BJ (cell line): ENCODE measurements at regions of chr15 and their contacts with region 1.

Region 1: DNA sequence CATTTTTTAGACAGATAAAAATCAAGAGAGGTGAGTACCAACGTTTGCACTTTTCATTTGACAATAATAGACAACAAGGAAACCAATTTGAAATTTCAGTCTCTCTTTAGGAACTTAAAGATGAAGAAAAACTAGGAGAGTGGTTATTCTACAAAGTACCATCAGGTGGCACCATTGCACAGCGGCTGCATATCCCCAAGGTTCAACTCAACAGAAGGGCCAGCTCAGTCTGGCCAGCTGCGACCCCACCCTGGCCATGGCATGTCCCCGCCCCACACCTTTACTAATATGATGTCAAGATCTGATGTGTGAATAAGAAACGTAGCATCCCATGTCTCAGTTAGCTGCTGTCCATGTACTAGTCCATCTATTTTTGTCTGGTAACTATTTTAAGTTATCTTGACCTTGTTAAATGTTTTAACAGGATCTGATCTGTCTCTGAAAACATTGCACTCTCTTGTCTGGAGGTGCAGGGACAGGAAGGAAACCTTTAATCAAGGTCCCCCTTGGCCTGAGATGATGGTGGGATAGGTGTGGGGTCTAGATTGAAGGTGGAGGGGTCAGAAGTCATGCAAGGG is 35.5 kb upstream of the CGNL1 start:
- DNase-seq: no peak
- H3K4me3 ChIP-seq: no peak overlapping the region
- H3K27me3 ChIP-seq: no peaks in the 10 kb centered on the region
- CTCF ChIP-seq: peak; percentile 82

Region 2: DNA sequence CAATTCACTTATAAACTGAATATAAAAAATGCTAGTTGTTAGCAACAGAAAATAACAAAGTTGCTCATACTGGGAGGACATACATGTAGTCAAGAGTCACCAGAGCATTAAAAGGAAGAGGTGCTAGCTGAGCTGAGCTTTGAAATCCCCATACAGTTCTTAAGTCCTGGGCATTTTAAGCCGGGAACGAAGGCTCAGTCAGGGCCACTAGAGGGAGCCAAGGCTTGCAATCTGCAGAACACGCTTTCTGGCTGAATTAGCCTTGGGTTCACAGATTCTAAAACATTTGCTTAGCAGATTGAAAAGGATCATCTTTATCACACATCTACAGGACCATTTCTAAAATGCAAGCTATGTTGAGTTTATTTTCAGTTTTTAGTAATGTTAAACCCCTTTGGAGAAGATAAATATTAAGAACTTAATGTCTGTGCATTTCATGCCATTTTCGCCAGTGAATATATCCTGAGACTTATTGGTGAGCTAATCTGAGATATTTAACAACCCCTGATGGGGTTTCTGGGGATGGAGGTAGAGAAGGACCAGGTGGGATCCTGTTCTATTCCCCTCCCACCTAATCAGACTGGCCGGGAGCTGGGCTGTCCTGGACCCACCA is 849.6 kb before region 1 on chr15:
- CTCF ChIA-PET with region 1: no interaction called
- POLR2A ChIA-PET with region 1: interaction called, 10 read pairs
- DNase-seq: peak; percentile 18
- H3K4me3 ChIP-seq: no peak overlapping the region
- H3K27me3 ChIP-seq: no peaks in the 10 kb centered on the region; the same call in 1 of the 2 replicates
- CTCF ChIP-seq: peak; percentile 96

Region 3: GRCh38 chr15:57323806-57324589 is 16.8 kb before region 1 on chr15:
- CTCF ChIA-PET with region 1: interaction called, 21 read pairs
- POLR2A ChIA-PET with region 1: no interaction called
- DNase-seq: peak; percentile 34
- H3K4me3 ChIP-seq: no peak overlapping the region
- H3K27me3 ChIP-seq: no peaks in the 10 kb centered on the region
- CTCF ChIP-seq: no peak

Region 4: GRCh38 chr15:57462381-57462780 is 121.6 kb after region 1 on chr15:
- CTCF ChIA-PET with region 1: interaction called, 15 read pairs
- POLR2A ChIA-PET with region 1: no interaction called
- DNase-seq: no peak
- H3K4me3 ChIP-seq: no peak overlapping the region
- H3K27me3 ChIP-seq: peaks cover 4% of the 10 kb centered on the region; the same call in 1 of the 2 replicates
- CTCF ChIP-seq: peak; percentile 38

Region 5: GRCh38 chr15:57527382-57528091 is 186.8 kb after region 1 on chr15:
- CTCF ChIA-PET with region 1: interaction called, 336 read pairs
- POLR2A ChIA-PET with region 1: interaction called, 5 read pairs
- DNase-seq: no peak
- H3K4me3 ChIP-seq: no peak overlapping the region
- H3K27me3 ChIP-seq: no peaks in the 10 kb centered on the region
- CTCF ChIP-seq: peak; percentile 51

Region 6: DNA sequence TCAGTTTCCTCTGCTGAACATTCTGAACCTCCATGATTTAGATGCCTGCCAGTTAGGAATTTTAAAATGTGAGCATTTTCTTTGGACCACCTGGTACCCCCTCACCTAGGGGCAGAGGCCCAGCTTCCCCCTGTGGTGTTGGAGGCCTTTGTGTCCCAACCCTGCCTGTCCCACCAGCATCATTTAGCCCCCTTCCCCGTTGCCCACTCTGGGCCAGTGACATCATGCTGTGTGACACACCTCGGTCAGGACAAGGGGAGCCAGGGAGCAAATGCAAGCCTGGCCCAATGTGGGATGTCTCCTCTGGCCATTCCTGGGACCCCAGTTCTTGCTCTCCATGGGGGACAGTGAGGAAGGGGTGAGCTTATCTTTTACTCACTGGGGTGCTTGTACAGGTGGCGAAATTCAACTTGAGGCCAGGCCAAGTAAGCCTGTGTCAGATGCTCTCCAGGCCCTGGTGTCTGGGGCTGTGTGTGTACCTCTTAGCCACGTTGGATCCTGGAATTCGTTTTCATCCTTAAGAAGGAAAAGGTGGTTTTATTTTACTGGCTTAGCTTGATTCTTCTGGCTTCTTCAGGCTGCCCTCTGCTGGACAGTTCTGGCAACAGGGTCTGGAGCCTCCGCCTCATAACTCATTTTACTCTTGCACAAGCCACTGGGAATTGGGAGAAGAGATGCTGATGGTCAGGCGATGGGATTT is 201.2 kb after region 1 on chr15:
- CTCF ChIA-PET with region 1: interaction called, 63 read pairs
- POLR2A ChIA-PET with region 1: no interaction called
- DNase-seq: peak; percentile 18
- H3K4me3 ChIP-seq: no peak overlapping the region
- H3K27me3 ChIP-seq: no peaks in the 10 kb centered on the region; the same call in none of the 2 replicates
- CTCF ChIP-seq: peak; percentile 92

Region 7: DNA sequence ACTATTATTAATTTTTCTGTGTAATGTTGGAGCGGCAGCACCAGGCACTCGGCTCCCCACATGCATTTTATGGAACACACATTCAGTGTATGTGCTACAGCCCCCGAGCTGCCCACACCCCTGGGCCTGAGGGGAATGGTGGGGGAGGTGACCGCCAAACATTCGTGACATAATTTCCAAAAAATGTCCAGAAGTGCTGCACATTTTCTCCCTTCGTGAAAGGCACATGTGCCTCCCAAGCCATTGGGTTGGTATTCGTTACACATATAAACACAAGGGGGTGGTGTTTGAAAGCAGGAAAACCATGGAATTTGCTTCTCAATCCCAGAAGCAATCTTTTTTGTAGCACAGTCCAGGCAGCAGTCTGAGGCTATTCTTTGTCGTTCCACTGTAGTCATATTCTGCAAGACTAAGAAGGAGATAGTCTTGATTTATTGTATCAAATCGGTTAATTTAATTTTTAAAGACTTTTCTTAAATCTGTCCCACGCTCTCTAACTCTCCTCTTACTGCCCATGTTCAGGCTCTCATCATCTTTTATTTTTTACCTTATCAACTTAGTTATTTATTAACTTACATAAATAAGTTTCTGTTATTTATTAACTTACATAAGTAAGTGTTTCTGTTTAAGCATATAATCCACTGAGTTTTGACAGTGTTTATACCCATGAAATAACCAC is 326.5 kb after region 1 on chr15:
- CTCF ChIA-PET with region 1: no interaction called
- POLR2A ChIA-PET with region 1: no interaction called
- DNase-seq: peak; percentile 68
- H3K4me3 ChIP-seq: no peak overlapping the region
- H3K27me3 ChIP-seq: no peaks in the 10 kb centered on the region
- CTCF ChIP-seq: peak; percentile 54